Activated naive CD4-positive, alpha-beta T cell treated with anti-CD3 and anti-CD28 coated beads for 36 hours (primary cell): ENCODE measurements at regions of chr20 and their contacts with region 1.

Region 1: GRCh38 chr20:36745927-36746659 is at the start of gene NDRG3:
- DNase-seq: peak; percentile 96
- H3K4me3 Mint-ChIP-seq: peak within 1 kb of the TSS; percentile 86
- H3K27ac Mint-ChIP-seq: peak within 1 kb of the TSS; percentile 86
- H3K4me1 Mint-ChIP-seq: peaks cover 21% of the 10 kb centered on the region
- H3K27me3 Mint-ChIP-seq: no peaks in the 10 kb centered on the region
- total RNA-seq, gene NDRG3: 26.1 to 28.2 TPM

Region 2: DNA sequence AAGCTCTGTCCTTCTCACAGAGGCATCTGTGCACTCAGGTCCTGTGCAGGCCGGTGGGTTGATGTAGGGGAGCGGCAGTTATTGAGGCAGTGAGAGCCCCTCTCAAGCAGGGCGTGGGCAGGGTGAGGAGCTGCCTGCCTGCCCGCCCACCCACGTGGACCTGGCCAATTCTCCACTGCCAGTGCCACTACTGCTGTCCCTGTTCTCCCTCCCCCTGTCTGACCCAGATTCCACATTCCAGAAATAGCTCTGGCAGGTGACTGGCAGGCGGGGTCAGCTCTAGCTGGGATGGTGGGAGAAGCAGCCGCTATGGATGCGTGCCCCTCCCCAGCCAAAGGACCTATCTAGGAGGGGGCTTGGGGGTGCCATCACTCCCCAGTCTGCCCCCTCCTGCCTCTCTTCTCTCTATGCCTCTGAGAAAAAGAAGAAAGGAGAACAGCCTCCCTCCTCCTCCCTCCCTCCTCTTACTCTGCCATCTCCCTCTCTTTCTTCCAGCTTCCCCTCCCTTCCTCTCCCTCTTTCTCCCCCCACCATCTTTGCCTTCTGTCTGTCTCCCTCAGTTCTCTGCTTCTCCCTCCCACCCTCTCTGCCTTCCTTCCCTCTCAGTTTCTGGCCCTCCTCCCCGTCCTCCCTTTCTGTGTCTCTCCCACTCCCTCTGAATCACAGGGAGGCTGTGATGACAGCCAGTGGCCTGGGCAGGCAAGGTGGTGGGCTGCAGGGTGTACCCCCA is 291.2 kb before region 1 on chr20:
- CTCF ChIA-PET with region 1: no interaction called
- intact Hi-C with region 1: no loop called
- DNase-seq: no peak
- H3K4me3 Mint-ChIP-seq: no peak overlapping the region
- H3K27ac Mint-ChIP-seq: no peak overlapping the region
- H3K4me1 Mint-ChIP-seq: no peaks in the 10 kb centered on the region
- H3K27me3 Mint-ChIP-seq: no peaks in the 10 kb centered on the region

Region 3: GRCh38 chr20:36728986-36729385 is 17.1 kb before region 1 on chr20:
- CTCF ChIA-PET with region 1: interaction called, 3 read pairs
- intact Hi-C with region 1: loop called (anchors 1 kb)
- DNase-seq: peak; percentile 10
- H3K4me3 Mint-ChIP-seq: no peak overlapping the region
- H3K27ac Mint-ChIP-seq: no peak overlapping the region
- H3K4me1 Mint-ChIP-seq: peaks cover 19% of the 10 kb centered on the region
- H3K27me3 Mint-ChIP-seq: no peaks in the 10 kb centered on the region

Region 4: GRCh38 chr20:36773597-36774390 is 27.7 kb after region 1 on chr20 and contains the start of gene DSN1:
- CTCF ChIA-PET with region 1: interaction called, 13 read pairs
- intact Hi-C with region 1: loop called (anchors 1 kb)
- DNase-seq: peak; percentile 98
- H3K4me3 Mint-ChIP-seq: peak within 1 kb of the TSS; percentile 97
- H3K27ac Mint-ChIP-seq: peak within 1 kb of the TSS; percentile 97
- H3K4me1 Mint-ChIP-seq: peaks cover 21% of the 10 kb centered on the region
- H3K27me3 Mint-ChIP-seq: no peaks in the 10 kb centered on the region
- total RNA-seq, gene DSN1: 23.0 to 24.7 TPM

Region 5: GRCh38 chr20:37298190-37298939 is 552.3 kb after region 1 on chr20:
- CTCF ChIA-PET with region 1: no interaction called
- intact Hi-C with region 1: no loop called
- DNase-seq: no peak
- H3K4me3 Mint-ChIP-seq: no peak overlapping the region
- H3K27ac Mint-ChIP-seq: no peak overlapping the region
- H3K4me1 Mint-ChIP-seq: peaks cover 32% of the 10 kb centered on the region
- H3K27me3 Mint-ChIP-seq: no peaks in the 10 kb centered on the region